ENCODE measurements at regions of chr2 and their contacts with region 1.

Region 1: GRCh38 chr2:222561817-222562645 is 93.9 kb downstream of the FARSB start:
- DNase-seq: peak in 25 of 42 donors; percentile 9 to 73 (median 51)

Region 2: DNA sequence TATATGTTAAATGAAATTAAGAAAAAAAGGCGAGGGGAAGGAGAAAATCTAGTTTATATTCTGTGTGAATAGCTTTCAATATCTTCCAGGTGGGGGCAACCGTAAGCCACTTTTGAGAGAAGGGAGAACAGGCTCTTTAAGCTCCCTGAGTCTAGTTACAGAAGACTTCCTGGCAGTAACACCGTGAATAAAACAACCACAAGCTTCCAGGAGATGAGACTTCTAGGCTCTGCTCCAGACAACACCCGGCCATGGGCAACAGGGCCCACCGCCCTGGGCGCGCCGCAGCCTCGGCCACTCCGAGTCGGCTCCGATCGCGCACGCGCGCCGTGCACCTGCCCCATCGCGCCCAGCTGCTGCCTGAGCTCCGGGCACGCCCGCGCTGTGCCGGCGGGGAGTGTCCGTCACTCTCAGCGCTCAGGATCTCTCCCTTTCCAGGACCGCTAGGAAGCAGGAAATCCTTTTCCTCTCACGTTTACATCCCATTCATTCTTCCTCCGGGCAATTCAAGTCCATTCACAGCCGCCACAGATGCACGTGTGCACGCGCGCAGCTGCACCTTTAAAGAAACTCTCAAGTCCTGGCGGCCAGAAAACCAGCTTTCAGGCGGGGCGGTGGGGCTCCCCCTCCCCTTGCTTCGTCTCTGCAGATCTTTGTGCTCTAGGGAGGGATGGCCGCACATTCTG is 243.9 kb before region 1 on chr2:
- intact Hi-C with region 1: loop called (anchors 5 kb)
- DNase-seq: peak in 32 of 42 donors; percentile 25 to 79 (median 51)

Measured in head of caudate nucleus (tissue), 42 donors.